CD8-positive, alpha-beta T cell (primary cell): ENCODE measurements at regions of chr12 and their contacts with region 1.

Region 1: DNA sequence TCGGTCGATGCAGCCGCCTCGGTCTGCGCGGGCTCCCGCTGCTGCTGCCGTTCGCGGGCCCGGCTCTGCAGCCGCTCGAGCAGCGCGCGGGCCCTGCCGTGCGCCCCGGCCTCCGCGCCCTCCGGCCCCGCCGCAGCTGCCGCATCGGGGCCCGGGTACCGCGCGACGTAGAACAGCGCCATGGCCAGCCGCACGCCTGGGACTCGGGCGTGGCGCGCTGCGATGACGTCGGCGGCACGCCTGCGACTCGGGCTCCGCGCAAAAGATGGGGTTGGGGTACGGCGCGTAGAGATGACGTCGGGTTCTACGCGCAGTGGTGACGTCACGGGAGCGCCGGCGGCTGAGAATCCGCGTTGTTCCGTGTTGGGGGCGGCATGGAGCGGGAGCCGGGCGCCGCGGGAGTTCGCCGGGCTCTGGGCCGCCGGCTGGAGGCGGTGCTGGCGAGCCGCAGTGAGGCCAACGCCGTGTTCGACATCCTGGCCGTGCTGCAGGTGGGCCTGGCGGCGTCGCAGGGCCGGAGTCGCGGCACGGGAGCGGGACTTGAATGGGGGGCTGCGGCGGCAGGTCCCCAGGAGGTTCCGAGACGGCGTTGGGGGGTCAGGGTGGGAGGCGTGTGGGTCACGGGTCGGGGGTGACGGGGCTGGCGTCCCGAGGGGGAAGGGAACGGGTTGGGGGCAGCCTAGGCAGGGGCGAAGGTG is at the starts of genes DDX51 and NOC4L:
- DNase-seq: peak; percentile 92 to 98 (median 96)
- ATAC-seq: peak; percentile 89
- H3K4me3 ChIP-seq: peak within 1 kb of the TSS; percentile 80 to 98
- H3K4me3 Mint-ChIP-seq: peak within 1 kb of the TSS; percentile 95
- H3K27ac ChIP-seq: peak within 1 kb of the TSS; percentile 84 to 90
- H3K27ac Mint-ChIP-seq: peak within 1 kb of the TSS; percentile 98
- H3K4me1 ChIP-seq: peaks cover 24% of the 10 kb centered on the region
- H3K4me1 Mint-ChIP-seq: peaks cover 27% of the 10 kb centered on the region
- H3K27me3 ChIP-seq: no peaks in the 10 kb centered on the region
- H3K27me3 Mint-ChIP-seq: no peaks in the 10 kb centered on the region
- CTCF ChIP-seq: no peak
- total RNA-seq, gene DDX51: 61.5 to 66.5 TPM
- total RNA-seq, gene NOC4L: 25.8 to 28.3 TPM

Region 2: GRCh38 chr12:131415781-131416180 is 728.5 kb before region 1 on chr12:
- CTCF ChIA-PET with region 1: no interaction called
- POLR2A ChIA-PET with region 1: no interaction called
- intact Hi-C with region 1: no loop called
- DNase-seq: peak in 1 of 9 experiments; percentile 13
- ATAC-seq: no peak
- H3K4me3 ChIP-seq: no peak overlapping the region
- H3K4me3 Mint-ChIP-seq: no peak overlapping the region
- H3K27ac ChIP-seq: no peak overlapping the region
- H3K27ac Mint-ChIP-seq: no peak overlapping the region
- H3K4me1 ChIP-seq: no peaks in the 10 kb centered on the region
- H3K4me1 Mint-ChIP-seq: no peaks in the 10 kb centered on the region
- H3K27me3 ChIP-seq: no peaks in the 10 kb centered on the region
- H3K27me3 Mint-ChIP-seq: peaks cover 5% of the 10 kb centered on the region
- CTCF ChIP-seq: no peak

Region 3: GRCh38 chr12:132083941-132084620 is 60.2 kb before region 1 on chr12:
- CTCF ChIA-PET with region 1: no interaction called
- POLR2A ChIA-PET with region 1: interaction called, 3 read pairs
- intact Hi-C with region 1: loop called (anchors 1 to 2 kb)
- DNase-seq: peak; percentile 74 to 94 (median 85)
- ATAC-seq: peak; percentile 92
- H3K4me3 ChIP-seq: peak overlapping the region; percentile 62 to 63
- H3K4me3 Mint-ChIP-seq: peak overlapping the region; percentile 85
- H3K27ac ChIP-seq: peak overlapping the region; percentile 70 to 88
- H3K27ac Mint-ChIP-seq: peak overlapping the region; percentile 85
- H3K4me1 ChIP-seq: peaks cover 23% of the 10 kb centered on the region
- H3K4me1 Mint-ChIP-seq: peaks cover 30% of the 10 kb centered on the region
- H3K27me3 ChIP-seq: no peaks in the 10 kb centered on the region
- H3K27me3 Mint-ChIP-seq: no peaks in the 10 kb centered on the region
- CTCF ChIP-seq: no peak

Region 4: GRCh38 chr12:132132609-132133430 is 11.4 kb before region 1 on chr12:
- CTCF ChIA-PET with region 1: no interaction called
- POLR2A ChIA-PET with region 1: no interaction called
- intact Hi-C with region 1: no loop called
- DNase-seq: no peak
- ATAC-seq: no peak
- H3K4me3 ChIP-seq: no peak overlapping the region
- H3K4me3 Mint-ChIP-seq: no peak overlapping the region
- H3K27ac ChIP-seq: no peak overlapping the region
- H3K27ac Mint-ChIP-seq: no peak overlapping the region
- H3K4me1 ChIP-seq: no peaks in the 10 kb centered on the region
- H3K4me1 Mint-ChIP-seq: no peaks in the 10 kb centered on the region
- H3K27me3 ChIP-seq: no peaks in the 10 kb centered on the region
- H3K27me3 Mint-ChIP-seq: no peaks in the 10 kb centered on the region
- CTCF ChIP-seq: no peak